HepG2 (cell line): ENCODE measurements at regions of chr3 and their contacts with region 1.

Region 1: GRCh38 chr3:164608554-164609276 is 469.6 kb downstream of the SI start:
- DNase-seq: no peak
- ATAC-seq: no peak
- H3K4me3 ChIP-seq: no peak overlapping the region
- H3K27ac ChIP-seq: no peak overlapping the region
- H3K4me1 ChIP-seq: no peaks in the 10 kb centered on the region
- H3K27me3 ChIP-seq: no peaks in the 10 kb centered on the region
- CTCF ChIP-seq: no peak
- EP300 ChIP-seq: no peak
- POLR2A ChIP-seq: no peak
- RAD21 ChIP-seq: no peak

Region 2: DNA sequence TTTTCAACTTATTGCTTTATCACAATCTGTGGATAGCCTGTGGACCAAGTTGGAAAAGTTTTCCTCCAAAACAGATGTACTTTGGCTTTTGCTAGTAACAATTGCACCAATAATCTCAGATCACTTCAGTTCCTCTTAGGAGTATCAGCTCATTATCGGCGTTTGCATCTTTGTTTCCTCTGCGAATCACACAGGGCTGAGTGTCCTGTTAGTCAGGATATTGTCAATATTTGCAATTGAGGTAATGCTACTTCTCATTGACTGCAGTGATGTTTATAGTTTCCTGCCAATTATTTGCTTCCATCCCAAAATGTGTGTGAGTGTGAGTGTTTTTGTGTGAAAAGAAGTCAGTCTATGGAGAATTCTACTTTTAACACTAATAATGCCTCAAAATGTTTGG is 75.4 kb before region 1 on chr3:
- CTCF ChIA-PET with region 1: no interaction called
- POLR2A ChIA-PET with region 1: no interaction called
- in situ Hi-C with region 1: no loop called
- intact Hi-C with region 1: loop called (anchors 2 kb)
- DNase-seq: no peak
- ATAC-seq: no peak
- H3K4me3 ChIP-seq: no peak overlapping the region
- H3K27ac ChIP-seq: no peak overlapping the region
- H3K4me1 ChIP-seq: no peaks in the 10 kb centered on the region
- H3K27me3 ChIP-seq: no peaks in the 10 kb centered on the region
- CTCF ChIP-seq: no peak
- EP300 ChIP-seq: no peak
- POLR2A ChIP-seq: no peak
- RAD21 ChIP-seq: no peak